Activated naive CD4-positive, alpha-beta T cell treated with anti-CD3 and anti-CD28 coated beads for 36 hours (primary cell): ENCODE measurements at regions of chr17 and their contacts with region 1.

Region 1: GRCh38 chr17:75784473-75785015 is at the start of gene UNK:
- DNase-seq: peak; percentile 98
- H3K4me3 Mint-ChIP-seq: peak within 1 kb of the TSS; percentile 90
- H3K27ac Mint-ChIP-seq: peak within 1 kb of the TSS; percentile 100
- H3K4me1 Mint-ChIP-seq: peaks cover 51% of the 10 kb centered on the region
- H3K27me3 Mint-ChIP-seq: peaks cover 2% of the 10 kb centered on the region
- total RNA-seq, gene UNK: 19.1 to 21.4 TPM

Region 2: GRCh38 chr17:75261336-75262111 is 523.0 kb before region 1 on chr17 and contains the starts of genes GGA3 and MRPS7:
- CTCF ChIA-PET with region 1: no interaction called
- intact Hi-C with region 1: loop called (anchors 10 kb)
- DNase-seq: peak; percentile 98
- H3K4me3 Mint-ChIP-seq: peak within 1 kb of the TSS; percentile 93
- H3K27ac Mint-ChIP-seq: peak within 1 kb of the TSS; percentile 99
- H3K4me1 Mint-ChIP-seq: peaks cover 53% of the 10 kb centered on the region
- H3K27me3 Mint-ChIP-seq: no peaks in the 10 kb centered on the region
- total RNA-seq, gene GGA3: 65.7 to 66.1 TPM
- total RNA-seq, gene MRPS7: 73.3 to 78.3 TPM

Region 3: DNA sequence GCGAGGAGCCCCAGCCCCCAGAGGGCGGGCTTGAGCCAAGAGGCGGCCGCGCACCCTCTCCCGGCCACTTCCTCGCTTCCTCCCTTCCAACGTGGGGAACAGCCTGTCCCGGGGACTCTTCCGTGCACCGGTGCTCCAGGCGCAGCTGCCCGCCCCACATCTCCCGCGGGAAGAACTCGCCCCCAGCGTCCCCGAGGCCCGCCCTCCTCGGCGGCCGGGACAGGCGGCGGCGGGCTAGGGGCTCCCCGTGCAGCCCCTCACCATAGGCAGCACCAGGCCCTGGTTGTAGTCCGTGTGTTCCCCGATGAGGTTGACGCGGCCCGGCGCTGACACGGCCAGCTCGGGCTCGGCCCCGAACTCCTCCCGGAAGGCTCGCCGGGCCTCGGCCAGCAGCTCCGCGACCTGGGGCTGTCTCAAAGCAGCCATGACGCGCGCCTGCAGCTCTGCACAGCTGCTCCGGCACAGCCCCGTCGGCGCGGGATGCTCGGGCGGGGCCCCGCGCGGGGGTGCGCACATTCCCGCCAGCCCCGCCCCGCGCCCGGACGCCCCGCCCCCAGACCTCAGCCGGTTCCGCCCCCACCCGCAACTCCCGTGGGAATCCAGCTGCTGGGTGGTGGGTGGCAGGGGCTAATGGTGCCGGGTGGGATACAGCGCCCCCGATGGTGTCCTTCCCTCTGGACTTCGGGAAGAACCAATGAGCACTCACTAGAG is 19.7 kb before region 1 on chr17 and contains the start of gene GALK1:
- CTCF ChIA-PET with region 1: interaction called, 18 read pairs
- intact Hi-C with region 1: loop called (anchors 1 kb)
- DNase-seq: peak; percentile 82
- H3K4me3 Mint-ChIP-seq: peak within 1 kb of the TSS; percentile 84
- H3K27ac Mint-ChIP-seq: peak within 1 kb of the TSS; percentile 79
- H3K4me1 Mint-ChIP-seq: peaks cover 10% of the 10 kb centered on the region
- H3K27me3 Mint-ChIP-seq: no peaks in the 10 kb centered on the region
- total RNA-seq, gene GALK1: 48.7 to 50.2 TPM

Region 4: DNA sequence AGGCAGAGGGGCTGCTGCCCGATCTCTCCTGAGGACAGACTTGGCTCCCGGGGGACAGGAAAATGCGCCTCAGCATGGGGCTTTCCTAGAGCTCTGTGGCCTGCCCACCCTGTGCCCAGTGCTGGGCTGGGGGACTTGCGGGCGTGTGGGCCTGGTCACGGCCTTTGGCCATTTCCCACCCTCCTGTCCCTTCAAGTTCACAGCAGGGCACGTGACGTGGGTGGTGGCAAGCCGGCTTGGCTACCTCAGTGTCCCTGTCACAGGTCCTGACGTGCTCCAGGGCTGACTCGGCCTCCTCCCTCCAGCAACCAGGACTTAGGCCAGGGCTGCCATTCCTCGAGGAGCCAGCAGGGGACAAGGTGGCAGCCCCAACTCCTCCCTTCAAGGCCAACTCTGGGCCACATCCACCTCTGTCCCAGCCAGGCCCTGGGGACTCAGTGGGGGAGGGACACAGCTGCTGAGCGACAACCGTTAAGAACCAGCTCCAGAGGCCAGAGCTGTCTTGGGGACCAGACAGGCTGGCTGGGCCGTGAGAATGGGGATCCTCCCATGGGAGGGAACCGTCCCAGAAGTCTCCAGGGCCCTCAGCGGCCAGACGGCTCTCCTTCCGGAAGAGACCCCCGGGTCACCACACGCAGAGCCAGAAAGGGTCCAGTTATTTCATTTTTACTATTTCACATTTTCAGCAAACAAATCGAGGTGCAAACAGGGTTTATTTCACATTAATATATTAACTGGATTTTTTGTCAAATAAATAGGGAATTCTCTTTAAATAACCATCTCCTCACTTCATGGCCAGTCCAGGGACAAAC is 60.7 kb after region 1 on chr17:
- CTCF ChIA-PET with region 1: interaction called, 6 read pairs
- intact Hi-C with region 1: loop called (anchors 1 kb)
- DNase-seq: peak; percentile 76
- H3K4me3 Mint-ChIP-seq: peak overlapping the region; percentile 95
- H3K27ac Mint-ChIP-seq: peak overlapping the region; percentile 72
- H3K4me1 Mint-ChIP-seq: peaks cover 22% of the 10 kb centered on the region
- H3K27me3 Mint-ChIP-seq: no peaks in the 10 kb centered on the region

Region 5: GRCh38 chr17:75978938-75979704 is 194.6 kb after region 1 on chr17 and contains the starts of genes ACOX1 and TEN1:
- CTCF ChIA-PET with region 1: no interaction called
- intact Hi-C with region 1: loop called (anchors 1 kb)
- DNase-seq: peak; percentile 98
- H3K4me3 Mint-ChIP-seq: peak within 1 kb of the TSS; percentile 99
- H3K27ac Mint-ChIP-seq: peak within 1 kb of the TSS; percentile 100
- H3K4me1 Mint-ChIP-seq: peaks cover 30% of the 10 kb centered on the region
- H3K27me3 Mint-ChIP-seq: no peaks in the 10 kb centered on the region
- total RNA-seq, gene ACOX1: 31.4 to 34.9 TPM
- total RNA-seq, gene TEN1: 9.7 to 12.2 TPM

Region 6: DNA sequence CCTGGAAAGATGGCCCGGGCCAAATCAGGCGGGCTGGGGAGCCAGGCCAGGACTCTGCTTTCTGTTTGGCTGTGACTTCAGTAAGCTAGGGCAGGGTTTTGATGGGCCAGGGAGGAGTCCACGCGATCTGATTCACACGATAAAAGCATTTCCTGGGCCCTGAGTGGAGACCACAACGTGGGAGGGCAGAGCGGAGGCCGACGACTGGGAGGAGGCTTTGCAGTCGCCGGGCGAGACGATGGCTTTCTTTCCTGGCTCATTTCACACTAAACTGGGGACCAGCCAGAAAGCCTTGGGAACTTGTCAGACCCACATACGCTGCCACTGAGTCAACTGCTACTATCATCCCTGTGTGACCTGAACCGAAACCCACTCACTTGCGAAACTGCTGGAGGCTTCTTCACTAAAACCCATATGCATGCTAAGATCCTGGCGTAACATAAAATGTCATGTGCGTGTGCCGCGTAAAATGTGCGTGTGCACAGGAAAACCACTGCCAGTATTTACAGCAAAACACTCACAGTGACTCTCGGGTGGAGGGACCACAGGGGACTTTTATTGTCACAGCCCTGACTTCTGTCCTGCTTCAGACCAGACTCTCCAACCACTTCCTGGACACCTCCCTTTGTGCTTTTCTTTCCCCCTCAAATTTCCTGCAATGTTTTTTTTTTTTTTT is 730.9 kb after region 1 on chr17:
- CTCF ChIA-PET with region 1: interaction called, 3 read pairs
- intact Hi-C with region 1: loop called (anchors 10 kb)
- DNase-seq: peak; percentile 88
- H3K4me3 Mint-ChIP-seq: peak overlapping the region; percentile 62
- H3K27ac Mint-ChIP-seq: peak overlapping the region; percentile 92
- H3K4me1 Mint-ChIP-seq: peaks cover 22% of the 10 kb centered on the region
- H3K27me3 Mint-ChIP-seq: no peaks in the 10 kb centered on the region